ENCODE measurements at regions of chr10 and their contacts with region 1.

Region 1: DNA sequence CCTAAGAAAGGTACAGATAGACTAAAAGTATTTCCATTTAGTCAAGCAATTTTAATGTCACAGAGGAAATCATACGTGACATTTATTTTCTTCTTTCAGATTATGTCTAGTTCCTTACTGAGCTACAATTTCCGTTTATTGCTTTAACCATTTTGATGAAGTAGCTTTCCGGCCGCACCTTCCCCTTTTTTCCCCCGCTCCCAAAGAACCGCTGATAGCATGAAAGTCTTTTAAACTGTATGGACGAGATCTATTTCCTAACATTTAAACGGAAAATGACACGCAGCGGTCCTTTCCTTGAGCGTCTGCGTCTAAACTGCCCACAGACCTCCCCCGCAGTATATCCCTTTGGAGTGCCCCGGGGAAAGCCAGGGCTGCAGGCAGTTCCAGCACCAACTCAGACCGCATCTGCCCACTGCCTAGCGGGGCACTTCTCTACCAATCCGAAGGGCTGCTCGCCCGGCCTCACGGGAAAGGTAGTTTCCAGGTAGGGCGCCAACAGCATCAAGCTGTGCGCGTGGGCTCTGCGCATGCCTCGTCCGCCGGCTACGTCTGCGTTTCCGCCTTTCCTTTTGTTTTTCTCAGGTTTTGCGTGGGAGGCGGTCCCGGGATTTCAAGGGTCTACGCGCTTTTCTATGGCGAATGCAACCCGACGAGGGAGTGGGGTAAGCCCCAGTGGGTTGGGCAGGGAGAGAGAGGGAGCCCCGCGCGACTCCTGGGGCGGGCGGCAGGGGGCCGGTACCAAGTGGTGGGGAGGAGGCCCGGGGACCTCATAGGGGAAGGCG is at the start of gene ZNF33A:
- DNase-seq: peak; percentile 92
- ATAC-seq: peak; percentile 84
- H3K4me3 Mint-ChIP-seq: peak within 1 kb of the TSS; percentile 97
- H3K27ac Mint-ChIP-seq: peak within 1 kb of the TSS; percentile 100
- H3K4me1 Mint-ChIP-seq: peaks cover 36% of the 10 kb centered on the region
- H3K27me3 Mint-ChIP-seq: no peaks in the 10 kb centered on the region
- CTCF ChIP-seq: no peak
- total RNA-seq, gene ZNF33A: 57.4 and 58.6 TPM in 2 replicates

Region 2: DNA sequence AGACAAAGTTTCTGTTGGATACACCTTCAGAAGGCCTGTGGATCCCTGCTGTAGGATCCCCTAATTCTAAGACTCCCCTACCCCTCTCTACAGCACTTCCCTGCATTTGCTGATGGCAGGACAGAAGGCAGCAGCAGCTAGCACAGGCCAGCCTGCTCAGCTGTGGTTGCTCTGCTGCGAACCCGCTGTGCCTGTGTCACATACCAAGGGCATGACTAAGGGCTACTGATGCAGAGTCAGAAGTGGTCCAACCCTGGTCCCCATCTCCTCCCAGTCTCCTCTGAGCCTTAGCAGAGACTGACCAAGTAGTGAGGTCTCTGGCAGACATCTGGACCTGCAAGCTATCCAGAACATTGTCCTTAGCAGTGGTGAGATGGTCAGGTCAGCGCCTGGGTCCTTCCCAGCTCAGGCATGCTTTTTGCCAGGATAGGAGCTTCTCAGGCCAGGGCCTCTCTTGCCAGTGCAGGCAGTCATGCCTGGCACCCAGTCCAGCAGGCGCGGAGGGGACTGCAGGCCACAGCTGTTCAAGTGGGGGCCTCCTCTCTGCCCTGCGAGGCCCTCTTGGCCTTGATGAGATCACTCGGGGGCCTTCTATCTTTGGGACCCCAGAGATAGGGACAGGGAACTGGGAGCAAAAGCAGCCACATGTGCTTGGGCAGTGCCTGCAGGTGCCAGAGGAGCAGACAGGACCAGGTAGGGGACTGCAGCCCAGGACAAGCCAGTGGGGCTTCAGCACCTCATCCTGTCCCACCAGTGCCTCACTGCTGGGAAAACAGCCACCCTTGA is 299.3 kb before region 1 on chr10:
- CTCF ChIA-PET with region 1: no interaction called
- POLR2A ChIA-PET with region 1: no interaction called
- intact Hi-C with region 1: no loop called
- DNase-seq: no peak
- ATAC-seq: no peak
- H3K4me3 Mint-ChIP-seq: no peak overlapping the region
- H3K27ac Mint-ChIP-seq: no peak overlapping the region
- H3K4me1 Mint-ChIP-seq: no peaks in the 10 kb centered on the region
- H3K27me3 Mint-ChIP-seq: no peaks in the 10 kb centered on the region
- CTCF ChIP-seq: no peak

Region 3: DNA sequence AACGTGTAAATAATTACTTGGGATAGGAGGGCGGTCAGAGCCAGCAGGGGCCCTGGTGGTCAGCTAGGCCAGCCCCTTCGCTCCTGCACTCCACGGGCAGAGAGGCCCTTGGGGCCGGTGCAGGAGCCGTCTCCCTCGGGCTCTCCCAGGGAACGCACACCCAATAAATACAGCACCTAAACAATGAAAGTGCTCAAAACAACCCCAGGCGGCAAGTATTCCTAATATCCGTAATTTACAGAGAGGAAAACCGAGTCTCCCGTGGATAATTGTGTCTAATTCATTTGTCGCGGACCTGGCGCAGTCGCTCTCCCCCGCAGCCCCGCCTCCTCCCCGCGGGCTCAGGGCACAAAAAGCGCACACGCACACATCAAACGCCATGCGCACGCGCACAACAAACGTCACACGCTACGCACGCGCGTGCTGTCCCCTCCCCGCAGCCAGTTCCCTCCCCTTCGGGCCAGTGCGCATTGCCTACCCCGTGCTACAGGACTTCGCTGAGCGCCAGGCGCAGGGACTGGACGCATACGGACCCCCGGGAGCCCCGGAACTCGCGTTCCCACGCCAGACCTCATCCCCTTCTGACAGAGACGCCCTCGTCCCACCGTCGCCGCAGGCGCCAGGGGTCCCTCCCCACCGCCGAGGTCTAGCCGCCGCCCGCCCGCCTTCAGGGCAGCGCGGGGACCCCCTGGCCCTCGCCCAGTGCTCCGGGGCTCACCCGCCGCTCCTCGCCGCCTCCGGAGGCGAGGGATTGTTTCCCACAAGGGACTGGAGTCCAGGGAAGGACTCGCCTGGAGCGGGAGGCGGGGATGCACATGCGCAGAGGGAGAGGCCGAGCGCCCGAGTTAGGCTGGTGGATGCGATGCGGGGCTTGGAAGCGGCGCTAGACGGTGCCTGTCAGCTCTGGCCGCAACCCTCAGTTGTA is 152.8 kb before region 1 on chr10 and contains the start of gene ZNF248:
- CTCF ChIA-PET with region 1: no interaction called
- POLR2A ChIA-PET with region 1: interaction called, 7 read pairs
- intact Hi-C with region 1: loop called (anchors 1 kb)
- DNase-seq: peak; percentile 91
- ATAC-seq: peak; percentile 96
- H3K4me3 Mint-ChIP-seq: peak within 1 kb of the TSS; percentile 95
- H3K27ac Mint-ChIP-seq: peak within 1 kb of the TSS; percentile 93
- H3K4me1 Mint-ChIP-seq: peaks cover 31% of the 10 kb centered on the region
- H3K27me3 Mint-ChIP-seq: no peaks in the 10 kb centered on the region
- CTCF ChIP-seq: no peak
- total RNA-seq, gene ZNF248: 9.2 and 12.1 TPM in 2 replicates

Region 4: GRCh38 chr10:37976091-37976879 is 34.0 kb before region 1 on chr10 and contains the start of gene ZNF25:
- CTCF ChIA-PET with region 1: interaction called, 10 read pairs
- POLR2A ChIA-PET with region 1: interaction called, 55 read pairs
- intact Hi-C with region 1: loop called (anchors 1 kb)
- DNase-seq: peak; percentile 93
- ATAC-seq: peak; percentile 91
- H3K4me3 Mint-ChIP-seq: peak within 1 kb of the TSS; percentile 90
- H3K27ac Mint-ChIP-seq: peak within 1 kb of the TSS; percentile 95
- H3K4me1 Mint-ChIP-seq: peaks cover 19% of the 10 kb centered on the region
- H3K27me3 Mint-ChIP-seq: no peaks in the 10 kb centered on the region
- CTCF ChIP-seq: peak; percentile 24
- total RNA-seq, gene ZNF25: 3.2 and 3.5 TPM in 2 replicates

Region 5: GRCh38 chr10:38025283-38025682 is 15.0 kb after region 1 on chr10:
- CTCF ChIA-PET with region 1: no interaction called
- POLR2A ChIA-PET with region 1: interaction called, 3 read pairs
- intact Hi-C with region 1: loop called (anchors 2 kb)
- DNase-seq: no peak
- ATAC-seq: peak; percentile 69
- H3K4me3 Mint-ChIP-seq: no peak overlapping the region
- H3K27ac Mint-ChIP-seq: peak overlapping the region; percentile 43
- H3K4me1 Mint-ChIP-seq: peaks cover 24% of the 10 kb centered on the region
- H3K27me3 Mint-ChIP-seq: no peaks in the 10 kb centered on the region
- CTCF ChIP-seq: no peak

Region 6: GRCh38 chr10:38038107-38038931 is 28.0 kb after region 1 on chr10:
- CTCF ChIA-PET with region 1: no interaction called
- POLR2A ChIA-PET with region 1: interaction called, 3 read pairs
- intact Hi-C with region 1: loop called (anchors 1 kb)
- DNase-seq: no peak
- ATAC-seq: peak; percentile 81
- H3K4me3 Mint-ChIP-seq: peak overlapping the region; percentile 74
- H3K27ac Mint-ChIP-seq: peak overlapping the region; percentile 87
- H3K4me1 Mint-ChIP-seq: peaks cover 36% of the 10 kb centered on the region
- H3K27me3 Mint-ChIP-seq: no peaks in the 10 kb centered on the region
- CTCF ChIP-seq: no peak

Region 7: DNA sequence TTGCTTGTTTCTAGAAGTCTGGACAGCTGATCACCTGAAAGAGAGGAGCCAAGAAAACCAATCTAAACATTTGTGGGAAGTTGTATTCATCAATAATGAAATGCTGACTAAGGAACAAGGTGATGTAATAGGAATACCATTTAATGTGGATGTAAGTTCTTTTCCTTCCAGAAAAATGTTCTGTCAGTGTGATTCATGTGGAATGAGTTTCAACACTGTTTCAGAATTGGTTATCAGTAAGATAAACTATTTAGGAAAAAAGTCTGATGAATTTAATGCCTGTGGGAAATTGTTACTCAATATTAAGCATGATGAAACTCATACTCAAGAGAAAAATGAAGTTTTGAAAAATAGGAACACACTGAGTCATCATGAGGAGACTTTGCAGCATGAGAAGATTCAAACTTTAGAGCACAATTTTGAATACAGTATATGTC is 44.1 kb after region 1 on chr10:
- CTCF ChIA-PET with region 1: no interaction called
- POLR2A ChIA-PET with region 1: no interaction called
- intact Hi-C with region 1: loop called (anchors 5 kb)
- DNase-seq: no peak
- ATAC-seq: no peak
- H3K4me3 Mint-ChIP-seq: no peak overlapping the region
- H3K27ac Mint-ChIP-seq: no peak overlapping the region
- H3K4me1 Mint-ChIP-seq: no peaks in the 10 kb centered on the region
- H3K27me3 Mint-ChIP-seq: no peaks in the 10 kb centered on the region
- CTCF ChIP-seq: no peak

Region 8: DNA sequence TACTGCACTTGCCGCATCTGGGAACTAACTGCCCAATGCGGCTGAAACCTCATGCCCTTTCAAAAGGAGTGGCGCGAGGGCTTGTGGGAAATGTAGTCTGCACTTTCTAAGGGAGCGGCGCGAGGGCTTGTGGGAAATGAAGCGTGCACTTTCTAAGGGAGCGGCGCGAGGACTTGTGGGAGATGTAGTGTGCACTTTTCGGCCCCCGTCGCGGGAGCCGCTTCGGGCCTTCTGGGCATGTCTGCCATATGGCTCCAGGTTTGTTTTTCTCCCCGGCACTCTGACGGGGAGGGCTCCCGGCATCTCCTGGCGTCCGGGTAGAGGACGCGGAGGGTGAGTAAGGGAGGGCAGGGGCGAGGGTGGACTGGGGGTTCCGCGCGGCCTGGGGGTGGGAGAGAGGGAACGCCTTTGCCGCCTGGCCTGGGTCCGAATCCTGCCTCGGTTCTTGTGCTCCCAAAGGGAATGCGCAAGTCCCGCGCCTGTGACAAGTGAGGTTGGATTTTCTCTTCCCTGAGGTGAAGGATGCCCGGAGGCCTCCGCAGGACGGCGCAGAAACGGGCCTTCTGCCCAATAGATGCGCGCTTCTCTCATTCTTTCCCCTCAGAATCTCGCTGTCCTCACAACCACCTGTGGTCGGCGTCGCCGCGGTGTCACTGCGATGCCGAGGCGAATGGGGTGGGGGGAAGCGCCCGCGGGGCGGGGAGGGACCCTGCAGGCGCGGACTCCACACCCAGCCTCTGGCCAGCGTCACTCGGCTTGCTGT is 84.0 kb after region 1 on chr10 and contains the start of gene ZNF37A:
- CTCF ChIA-PET with region 1: interaction called, 3 read pairs
- POLR2A ChIA-PET with region 1: interaction called, 4 read pairs
- intact Hi-C with region 1: loop called (anchors 1 kb)
- DNase-seq: peak; percentile 78
- ATAC-seq: peak; percentile 97
- H3K4me3 Mint-ChIP-seq: peak within 1 kb of the TSS; percentile 85
- H3K27ac Mint-ChIP-seq: peak within 1 kb of the TSS; percentile 75
- H3K4me1 Mint-ChIP-seq: peaks cover 28% of the 10 kb centered on the region
- H3K27me3 Mint-ChIP-seq: no peaks in the 10 kb centered on the region
- CTCF ChIP-seq: no peak
- total RNA-seq, gene ZNF37A: 20.8 and 23.1 TPM in 2 replicates